OCI-LY7 (cell line): ENCODE measurements at regions of chr19 and their contacts with region 1.

Region 1: GRCh38 chr19:9934132-9934950 is 2.0 kb downstream of the OLFM2 start:
- DNase-seq: peak; percentile 86
- H3K4me3 ChIP-seq: no peak overlapping the region
- H3K27ac ChIP-seq: no peak overlapping the region
- H3K4me1 ChIP-seq: no peaks in the 10 kb centered on the region
- CTCF ChIP-seq: peak; percentile 93

Region 2: DNA sequence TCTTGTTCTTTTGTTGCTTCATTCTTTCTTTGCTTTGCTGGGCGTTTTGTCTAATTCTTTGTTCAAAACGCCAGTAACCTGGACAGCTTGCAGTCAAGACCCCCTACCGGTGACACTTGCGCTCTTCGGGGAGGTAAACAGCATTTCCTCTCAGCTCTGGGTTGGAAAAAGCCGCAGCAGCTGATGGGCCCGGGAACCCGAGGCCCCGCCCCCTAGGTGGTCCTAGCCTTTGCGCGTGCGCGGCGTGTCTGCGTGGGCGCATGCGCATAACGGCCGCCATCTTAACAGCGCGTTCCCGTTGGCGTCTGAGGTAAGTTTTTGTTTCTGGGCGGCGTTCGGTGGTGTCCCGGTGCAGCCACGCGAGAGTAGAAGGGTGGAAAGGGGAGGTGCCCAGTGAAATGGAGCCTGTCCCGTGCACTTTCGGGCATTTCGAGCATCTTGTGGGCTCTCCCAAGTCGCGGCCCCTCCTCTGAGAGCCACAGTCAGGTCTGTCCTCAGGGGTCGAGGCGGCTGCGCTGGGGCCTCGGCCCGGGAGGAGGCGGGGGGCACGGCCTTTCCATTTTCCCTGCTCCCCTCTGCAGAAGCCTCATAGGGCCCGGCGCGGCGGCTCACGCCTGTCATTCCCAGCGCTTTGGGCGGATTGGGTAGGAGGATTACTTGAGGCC is 610.3 kb before region 1 on chr19 and contains the start of gene ZNF559:
- CTCF ChIA-PET with region 1: no interaction called
- POLR2A ChIA-PET with region 1: no interaction called
- intact Hi-C with region 1: no loop called
- DNase-seq: peak; percentile 97
- H3K4me3 ChIP-seq: peak within 1 kb of the TSS; percentile 77
- H3K27ac ChIP-seq: peak within 1 kb of the TSS; percentile 95
- H3K4me1 ChIP-seq: peaks cover 18% of the 10 kb centered on the region
- CTCF ChIP-seq: peak; percentile 68
- total RNA-seq, gene ZNF559: 9.0 and 16.8 TPM in 2 replicates

Region 3: DNA sequence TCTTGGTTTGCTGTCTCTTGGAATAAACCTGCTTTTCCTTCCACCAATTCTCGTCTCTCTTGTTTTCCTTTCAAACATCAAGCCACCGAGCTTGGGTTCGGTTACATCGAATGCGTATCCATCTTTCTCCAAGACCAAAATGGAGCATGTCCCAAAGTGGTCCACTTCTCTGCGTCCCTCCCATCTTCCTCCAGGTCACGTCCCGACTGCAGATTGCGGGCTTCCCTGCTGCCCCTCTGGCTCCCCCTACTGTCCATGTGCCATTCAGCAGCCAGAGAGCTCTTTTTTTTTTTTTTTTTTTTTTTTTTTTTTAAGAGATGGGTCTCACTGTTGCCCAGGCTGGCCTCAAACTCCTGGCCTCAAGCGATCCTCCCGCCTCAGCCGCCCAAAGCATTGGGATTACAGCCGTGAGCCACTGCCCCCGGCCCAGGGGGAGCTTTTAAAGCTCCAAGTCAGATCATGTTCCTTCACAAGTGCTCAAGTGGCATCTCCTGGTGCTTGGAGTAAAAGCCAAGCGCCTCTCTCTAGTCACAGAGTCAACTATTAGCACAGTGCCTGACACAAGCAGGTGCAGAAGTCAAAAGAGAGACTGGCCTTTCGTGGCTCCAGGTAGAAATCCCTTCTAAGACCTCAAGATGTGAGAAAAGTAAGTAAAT is 66.0 kb after region 1 on chr19:
- CTCF ChIA-PET with region 1: no interaction called
- POLR2A ChIA-PET with region 1: no interaction called
- intact Hi-C with region 1: loop called (anchors 1 kb)
- DNase-seq: peak; percentile 66
- H3K4me3 ChIP-seq: no peak overlapping the region
- H3K27ac ChIP-seq: no peak overlapping the region
- H3K4me1 ChIP-seq: no peaks in the 10 kb centered on the region
- CTCF ChIP-seq: peak; percentile 85

Region 4: GRCh38 chr19:10027158-10027693 is 92.9 kb after region 1 on chr19:
- CTCF ChIA-PET with region 1: interaction called, 4 read pairs
- POLR2A ChIA-PET with region 1: no interaction called
- intact Hi-C with region 1: loop called (anchors 1 kb)
- DNase-seq: no peak
- H3K4me3 ChIP-seq: no peak overlapping the region
- H3K27ac ChIP-seq: no peak overlapping the region
- H3K4me1 ChIP-seq: no peaks in the 10 kb centered on the region
- CTCF ChIP-seq: no peak

Region 5: GRCh38 chr19:10112895-10113591 is 178.7 kb after region 1 on chr19:
- CTCF ChIA-PET with region 1: no interaction called
- POLR2A ChIA-PET with region 1: no interaction called
- intact Hi-C with region 1: loop called (anchors 5 kb)
- DNase-seq: peak; percentile 73
- H3K4me3 ChIP-seq: no peak overlapping the region
- H3K27ac ChIP-seq: peak overlapping the region; percentile 55
- H3K4me1 ChIP-seq: peaks cover 28% of the 10 kb centered on the region
- CTCF ChIP-seq: peak; percentile 86

Region 6: DNA sequence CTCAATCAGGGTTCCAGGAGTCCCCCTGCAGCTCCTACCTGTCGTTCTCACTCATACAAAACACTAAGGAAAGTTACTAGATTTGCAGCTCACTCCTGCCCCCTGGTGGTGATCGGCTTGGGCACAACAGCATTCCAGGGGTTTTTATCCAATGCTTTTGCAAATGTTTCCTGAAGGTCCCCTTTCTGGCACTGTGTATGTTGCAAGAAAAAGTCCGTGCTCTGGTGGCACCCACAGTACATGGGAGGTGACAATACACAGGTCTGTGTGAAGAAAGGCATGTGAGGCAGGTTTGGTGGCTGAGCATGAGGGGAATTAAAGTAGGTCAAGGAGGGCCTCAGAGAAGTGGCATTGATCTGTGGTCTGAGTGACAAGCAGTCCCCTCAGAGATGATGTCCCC is 454.6 kb after region 1 on chr19:
- CTCF ChIA-PET with region 1: no interaction called
- POLR2A ChIA-PET with region 1: no interaction called
- intact Hi-C with region 1: loop called (anchors 5 kb)
- DNase-seq: peak; percentile 79
- H3K4me3 ChIP-seq: no peak overlapping the region
- H3K27ac ChIP-seq: no peak overlapping the region
- H3K4me1 ChIP-seq: peaks cover 2% of the 10 kb centered on the region
- CTCF ChIP-seq: peak; percentile 99